Aorta (tissue), 5 donors: ENCODE measurements at regions of chr1 and their contacts with region 1.

Region 1: DNA sequence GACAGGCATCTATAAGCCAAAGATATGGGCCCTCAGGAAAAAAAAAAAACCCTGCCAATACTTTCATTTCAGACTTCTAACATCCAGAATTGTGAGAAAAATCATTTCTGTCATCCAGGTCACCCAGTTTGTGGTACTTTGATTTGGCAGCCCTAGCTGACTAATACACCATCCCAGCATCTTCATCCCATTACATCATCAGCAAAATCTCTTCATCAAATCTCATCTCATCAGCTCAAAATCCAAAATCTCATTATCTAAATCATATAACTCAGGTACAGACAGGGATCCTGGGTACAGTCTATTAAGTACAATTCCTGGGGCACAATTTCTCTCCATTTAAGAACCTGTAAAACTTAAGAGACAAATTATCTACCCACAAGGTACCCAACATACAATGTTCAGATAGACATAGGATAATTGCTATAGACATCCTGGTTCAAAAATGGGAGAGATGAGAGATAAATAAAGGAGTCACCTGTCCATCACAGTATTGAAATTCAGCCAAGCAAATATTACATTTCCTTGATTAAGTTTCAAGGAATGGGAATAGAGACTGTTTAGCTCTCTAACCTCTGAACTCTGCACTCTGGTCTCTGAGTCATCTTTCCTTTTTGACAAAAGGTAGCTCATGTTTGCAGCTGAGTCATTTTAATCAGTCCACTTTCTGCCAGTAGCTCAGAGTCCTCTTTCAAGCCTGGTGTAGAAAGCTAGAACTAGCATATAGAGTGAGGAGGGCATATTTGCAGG is 51.7 kb upstream of the GJA8 start:
- DNase-seq: no peak
- ATAC-seq: no peak
- H3K4me3 ChIP-seq: no peak overlapping the region
- H3K27ac ChIP-seq: no peak overlapping the region
- H3K4me1 ChIP-seq: no peaks in the 10 kb centered on the region
- H3K27me3 ChIP-seq: no peaks in the 10 kb centered on the region

Region 2: GRCh38 chr1:147833231-147833840 is 17.6 kb before region 1 on chr1:
- intact Hi-C with region 1: loop called in 1 of 2 experiments (anchors 2 kb)
- DNase-seq: no peak
- ATAC-seq: no peak
- H3K4me3 ChIP-seq: no peak overlapping the region
- H3K27ac ChIP-seq: no peak overlapping the region
- H3K4me1 ChIP-seq: no peaks in the 10 kb centered on the region
- H3K27me3 ChIP-seq: no peaks in the 10 kb centered on the region